Left ventricle myocardium inferior (tissue), 1 donor: ENCODE measurements at regions of chr22 and their contacts with region 1.

Region 1: GRCh38 chr22:35582861-35583670 is 34.1 kb downstream of the MB start:
- DNase-seq: peak; percentile 55
- H3K4me3 ChIP-seq: no peak overlapping the region
- H3K27ac ChIP-seq: peak overlapping the region; percentile 62
- H3K4me1 ChIP-seq: peaks cover 39% of the 10 kb centered on the region
- H3K27me3 ChIP-seq: no peaks in the 10 kb centered on the region
- CTCF ChIP-seq: peak; percentile 97

Region 2: DNA sequence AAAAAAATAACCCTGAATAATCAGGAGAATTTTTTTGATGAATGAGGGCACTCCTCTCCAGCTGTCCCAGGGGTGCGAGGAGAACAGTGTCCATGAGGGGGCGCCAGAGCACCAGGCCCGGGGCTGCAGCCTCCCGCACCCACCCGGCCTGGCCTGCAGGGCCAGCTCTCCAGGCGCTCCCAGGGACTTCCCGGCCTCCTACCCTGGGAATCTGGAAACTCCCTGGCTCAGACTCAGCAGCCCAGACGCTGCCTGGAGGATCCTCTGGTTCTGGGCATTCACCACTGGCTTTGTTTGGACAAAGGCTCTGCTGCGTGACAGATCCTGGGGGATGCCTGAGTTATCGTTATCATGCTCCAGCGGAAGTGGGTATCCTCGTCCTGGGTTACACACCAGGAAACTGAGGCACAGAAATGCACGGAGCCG is 152.2 kb before region 1 on chr22:
- intact Hi-C with region 1: loop called (anchors 10 kb)
- DNase-seq: peak; percentile 89
- H3K4me3 ChIP-seq: no peak overlapping the region
- H3K27ac ChIP-seq: peak overlapping the region; percentile 66
- H3K4me1 ChIP-seq: peaks cover 13% of the 10 kb centered on the region
- H3K27me3 ChIP-seq: no peaks in the 10 kb centered on the region
- CTCF ChIP-seq: peak; percentile 97